ENCODE measurements at regions of chr10 and their contacts with region 1.

Region 1: GRCh38 chr10:23702977-23703414 is 264.1 kb downstream of the OTUD1 start:
- DNase-seq: peak; percentile 81
- H3K4me3 Mint-ChIP-seq: peak overlapping the region; percentile 64
- H3K27ac Mint-ChIP-seq: no peak overlapping the region
- H3K4me1 Mint-ChIP-seq: peaks cover 6% of the 10 kb centered on the region
- H3K27me3 Mint-ChIP-seq: peaks cover 39% of the 10 kb centered on the region
- CTCF ChIP-seq: peak; percentile 83

Region 2: GRCh38 chr10:23293145-23293724 is 409.8 kb before region 1 on chr10:
- CTCF ChIA-PET with region 1: interaction called, 16 read pairs
- POLR2A ChIA-PET with region 1: no interaction called
- intact Hi-C with region 1: loop called (anchors 1 kb)
- DNase-seq: peak; percentile 69
- H3K4me3 Mint-ChIP-seq: no peak overlapping the region
- H3K27ac Mint-ChIP-seq: no peak overlapping the region
- H3K4me1 Mint-ChIP-seq: no peaks in the 10 kb centered on the region
- H3K27me3 Mint-ChIP-seq: peaks cover 30% of the 10 kb centered on the region
- CTCF ChIP-seq: peak; percentile 65

Region 3: GRCh38 chr10:23413629-23414089 is 289.3 kb before region 1 on chr10:
- CTCF ChIA-PET with region 1: no interaction called
- POLR2A ChIA-PET with region 1: no interaction called
- intact Hi-C with region 1: no loop called
- DNase-seq: no peak
- H3K4me3 Mint-ChIP-seq: no peak overlapping the region
- H3K27ac Mint-ChIP-seq: no peak overlapping the region
- H3K4me1 Mint-ChIP-seq: peaks cover 16% of the 10 kb centered on the region
- H3K27me3 Mint-ChIP-seq: no peaks in the 10 kb centered on the region
- CTCF ChIP-seq: no peak

Region 4: GRCh38 chr10:23525406-23525805 is 177.6 kb before region 1 on chr10:
- CTCF ChIA-PET with region 1: interaction called, 16 read pairs
- POLR2A ChIA-PET with region 1: no interaction called
- intact Hi-C with region 1: no loop called
- DNase-seq: peak; percentile 61
- H3K4me3 Mint-ChIP-seq: no peak overlapping the region
- H3K27ac Mint-ChIP-seq: no peak overlapping the region
- H3K4me1 Mint-ChIP-seq: peaks cover 6% of the 10 kb centered on the region
- H3K27me3 Mint-ChIP-seq: no peaks in the 10 kb centered on the region
- CTCF ChIP-seq: peak; percentile 76

Region 5: GRCh38 chr10:23535381-23535780 is 167.6 kb before region 1 on chr10:
- CTCF ChIA-PET with region 1: interaction called, 4 read pairs
- POLR2A ChIA-PET with region 1: no interaction called
- intact Hi-C with region 1: loop called (anchors 1 kb)
- DNase-seq: no peak
- H3K4me3 Mint-ChIP-seq: no peak overlapping the region
- H3K27ac Mint-ChIP-seq: no peak overlapping the region
- H3K4me1 Mint-ChIP-seq: peaks cover 7% of the 10 kb centered on the region
- H3K27me3 Mint-ChIP-seq: peaks cover 19% of the 10 kb centered on the region
- CTCF ChIP-seq: peak; percentile 20

Region 6: DNA sequence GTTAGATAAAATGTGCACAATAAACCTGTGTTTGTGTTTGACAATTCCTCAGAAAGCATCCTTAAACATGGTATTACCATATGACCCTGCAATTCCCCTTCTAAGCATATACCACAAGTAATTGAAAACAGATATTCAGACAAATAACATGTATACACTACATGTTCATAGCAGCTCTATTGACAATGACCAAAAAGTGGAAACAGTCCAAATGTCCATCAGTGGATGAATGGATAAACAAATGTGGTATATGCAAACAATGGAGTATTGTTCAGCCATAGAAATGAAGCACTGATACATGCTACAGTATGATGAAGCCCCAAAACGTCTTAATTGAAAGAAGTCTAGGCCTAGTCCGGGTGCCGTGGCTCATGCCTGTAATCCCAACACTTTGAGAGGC is 15.9 kb after region 1 on chr10:
- CTCF ChIA-PET with region 1: interaction called, 14 read pairs
- POLR2A ChIA-PET with region 1: no interaction called
- intact Hi-C with region 1: no loop called
- DNase-seq: no peak
- H3K4me3 Mint-ChIP-seq: no peak overlapping the region
- H3K27ac Mint-ChIP-seq: no peak overlapping the region
- H3K4me1 Mint-ChIP-seq: no peaks in the 10 kb centered on the region
- H3K27me3 Mint-ChIP-seq: peaks cover 38% of the 10 kb centered on the region
- CTCF ChIP-seq: no peak

Region 7: DNA sequence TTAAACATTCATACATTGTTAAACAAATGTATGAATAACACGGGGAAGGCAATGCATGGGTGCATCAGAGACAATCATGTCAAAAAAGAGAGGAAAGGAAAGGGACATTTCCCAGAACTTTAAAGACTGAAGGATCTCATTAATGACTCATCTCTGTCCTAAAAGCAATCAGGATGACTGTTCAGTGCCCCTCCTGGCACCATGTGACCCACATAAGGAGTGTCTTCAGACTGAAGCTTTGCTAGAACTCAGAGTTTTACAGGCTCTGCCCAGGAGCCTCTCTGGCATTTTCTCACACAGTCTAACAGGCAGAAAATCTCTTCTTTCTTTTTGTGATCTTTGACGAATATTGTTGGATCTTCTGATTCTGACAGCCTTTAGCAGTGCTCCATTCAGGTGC is 51.2 kb after region 1 on chr10:
- CTCF ChIA-PET with region 1: no interaction called
- POLR2A ChIA-PET with region 1: no interaction called
- intact Hi-C with region 1: no loop called
- DNase-seq: peak; percentile 12
- H3K4me3 Mint-ChIP-seq: no peak overlapping the region
- H3K27ac Mint-ChIP-seq: no peak overlapping the region
- H3K4me1 Mint-ChIP-seq: no peaks in the 10 kb centered on the region
- H3K27me3 Mint-ChIP-seq: peaks cover 44% of the 10 kb centered on the region
- CTCF ChIP-seq: no peak

Measured in MCF 10A (cell line).